ENCODE measurements at regions of chr4 and their contacts with region 1.

Region 1: GRCh38 chr4:700587-701264 is 4.9 kb upstream of the PCGF3 start:
- DNase-seq: no peak
- ATAC-seq: no peak
- H3K4me3 Mint-ChIP-seq: no peak overlapping the region
- H3K27ac Mint-ChIP-seq: no peak overlapping the region
- H3K4me1 Mint-ChIP-seq: peaks cover 13% of the 10 kb centered on the region
- H3K27me3 Mint-ChIP-seq: no peaks in the 10 kb centered on the region
- CTCF ChIP-seq: no peak

Region 2: DNA sequence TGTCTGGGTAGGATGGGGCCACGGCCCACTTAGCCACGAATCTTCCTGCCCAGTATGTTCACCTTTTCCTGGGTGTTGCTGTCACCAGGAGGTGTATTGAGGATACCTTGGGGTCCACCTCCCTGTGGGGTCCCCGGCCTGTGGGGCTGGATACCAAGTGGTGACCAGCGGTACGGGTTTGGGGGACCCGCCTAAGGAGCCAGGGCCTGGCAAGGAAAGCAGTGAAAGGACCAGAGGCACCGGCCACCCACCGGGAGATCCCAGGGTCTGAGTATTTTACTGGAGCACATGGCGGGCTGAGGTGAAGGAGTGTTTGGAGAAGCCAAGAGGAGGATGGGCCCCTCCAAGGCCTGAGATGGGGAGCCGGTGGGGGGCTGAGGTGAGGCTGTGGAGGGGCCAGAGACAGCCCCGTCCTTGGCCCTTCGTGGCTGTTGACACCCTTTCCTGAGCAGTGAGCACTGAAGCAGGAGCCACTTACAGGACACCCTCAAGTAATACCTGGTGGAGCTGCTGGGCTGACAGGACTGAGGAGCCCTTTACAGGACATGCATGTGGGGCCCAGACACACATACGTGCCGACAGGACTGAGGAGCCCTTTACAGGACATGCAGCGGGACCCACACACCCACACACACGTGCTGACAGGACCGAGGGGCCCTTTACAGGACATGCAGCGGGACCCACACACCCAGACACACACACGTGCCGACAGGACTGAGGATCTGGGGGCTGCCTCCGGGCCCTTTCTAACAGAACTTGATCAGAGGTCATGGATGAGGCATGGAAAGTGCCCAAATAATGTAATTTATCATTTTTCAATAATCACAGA is 163.1 kb before region 1 on chr4:
- CTCF ChIA-PET with region 1: no interaction called
- POLR2A ChIA-PET with region 1: no interaction called
- intact Hi-C with region 1: no loop called
- DNase-seq: no peak
- ATAC-seq: no peak
- H3K4me3 Mint-ChIP-seq: no peak overlapping the region
- H3K27ac Mint-ChIP-seq: no peak overlapping the region
- H3K4me1 Mint-ChIP-seq: no peaks in the 10 kb centered on the region
- H3K27me3 Mint-ChIP-seq: no peaks in the 10 kb centered on the region
- CTCF ChIP-seq: no peak

Region 3: DNA sequence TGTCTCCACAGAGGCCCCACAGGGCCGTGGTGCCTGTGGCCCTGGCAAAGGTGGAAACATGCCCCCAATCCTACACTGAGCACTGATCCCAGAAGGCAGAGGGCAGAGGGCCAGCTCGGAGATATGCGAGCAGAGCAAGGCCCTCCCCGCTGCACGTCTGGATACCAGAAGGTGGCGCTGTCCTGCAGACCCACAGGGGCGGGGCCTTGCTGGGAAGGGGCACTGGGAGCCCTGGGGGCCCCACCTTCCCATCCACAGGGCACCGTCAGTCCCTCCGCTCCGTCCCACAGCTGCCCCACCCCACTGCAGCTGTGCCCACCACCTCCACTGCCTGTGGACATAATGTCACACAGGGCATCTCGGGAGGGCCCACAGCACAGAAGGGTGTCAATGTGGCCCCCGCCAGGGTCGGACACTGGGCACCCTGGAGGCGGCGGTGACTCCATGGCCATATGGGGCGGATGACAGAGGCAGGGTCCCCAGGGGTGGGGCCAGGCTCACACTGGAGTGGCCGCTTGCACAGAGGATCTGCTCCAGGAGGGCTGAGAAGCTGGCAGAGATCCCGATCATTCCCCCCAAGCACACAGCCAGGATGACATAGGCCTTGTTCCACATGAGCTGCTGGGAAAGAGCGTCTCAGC is 16.6 kb before region 1 on chr4:
- CTCF ChIA-PET with region 1: interaction called, 11 read pairs
- POLR2A ChIA-PET with region 1: interaction called, 3 read pairs
- intact Hi-C with region 1: no loop called
- DNase-seq: peak; percentile 66
- ATAC-seq: peak; percentile 22
- H3K4me3 Mint-ChIP-seq: no peak overlapping the region
- H3K27ac Mint-ChIP-seq: no peak overlapping the region
- H3K4me1 Mint-ChIP-seq: peaks cover 7% of the 10 kb centered on the region
- H3K27me3 Mint-ChIP-seq: peaks cover 11% of the 10 kb centered on the region
- CTCF ChIP-seq: peak; percentile 71

Region 4: DNA sequence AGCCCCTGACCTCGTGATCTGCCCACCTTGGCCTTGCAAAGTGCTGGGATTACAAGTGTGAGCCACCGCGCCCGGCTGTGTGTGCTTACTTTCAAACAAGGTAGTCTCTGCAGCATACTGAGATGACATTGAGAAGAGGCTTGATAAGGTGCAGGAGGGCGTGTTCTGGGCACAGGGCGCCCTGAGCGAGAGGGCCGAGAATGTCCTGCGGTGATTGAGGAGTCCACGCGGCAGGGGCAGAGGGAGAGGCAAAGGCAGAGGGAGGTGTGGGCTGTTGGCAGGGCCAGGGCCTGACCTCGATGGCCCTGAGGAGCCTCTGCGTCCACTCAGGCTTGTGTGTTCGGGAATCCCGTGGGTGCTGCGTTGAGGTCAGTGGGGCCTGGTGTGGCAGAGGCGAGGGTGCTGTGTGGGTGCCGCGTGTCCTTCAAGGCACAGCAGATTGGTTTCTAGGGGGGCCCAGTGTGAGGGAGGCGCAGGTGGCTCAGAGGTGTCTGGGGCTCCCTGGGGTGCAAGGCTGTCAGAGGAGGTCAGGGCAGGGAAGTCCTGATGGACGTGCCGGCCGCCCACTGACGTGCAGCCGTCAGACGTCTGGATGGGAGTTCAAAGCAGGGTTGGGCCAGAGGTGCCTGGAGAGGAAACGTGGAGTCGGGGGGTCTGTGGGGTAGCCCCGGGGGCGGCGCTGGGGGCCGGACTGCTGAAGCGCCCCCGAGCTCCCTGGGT is 17.0 kb after region 1 on chr4:
- CTCF ChIA-PET with region 1: no interaction called
- POLR2A ChIA-PET with region 1: no interaction called
- intact Hi-C with region 1: no loop called
- DNase-seq: no peak
- ATAC-seq: no peak
- H3K4me3 Mint-ChIP-seq: no peak overlapping the region
- H3K27ac Mint-ChIP-seq: no peak overlapping the region
- H3K4me1 Mint-ChIP-seq: peaks cover 14% of the 10 kb centered on the region
- H3K27me3 Mint-ChIP-seq: no peaks in the 10 kb centered on the region
- CTCF ChIP-seq: no peak

Measured in activated CD8-positive, alpha-beta T cell treated with anti-CD3 and anti-CD28 coated beads for 36 hours (primary cell).